Activated CD4-positive, alpha-beta T cell treated with anti-CD3 and anti-CD28 coated beads, Interleukin-2, amount 10 ng/mL, durations not matched to agents 24 days and 14 days (primary cell): ENCODE measurements at regions of chr6 and their contacts with region 1.

Region 1: GRCh38 chr6:127291495-127291894 is 24.8 kb downstream of the RNF146 start:
- DNase-seq: no peak
- H3K4me3 Mint-ChIP-seq: peak overlapping the region; percentile 20
- H3K27ac Mint-ChIP-seq: peak overlapping the region; percentile 76
- H3K4me1 Mint-ChIP-seq: peaks cover 26% of the 10 kb centered on the region
- H3K27me3 Mint-ChIP-seq: no peaks in the 10 kb centered on the region

Region 2: GRCh38 chr6:127342946-127343808 is 51.7 kb after region 1 on chr6 and contains the start of gene ECHDC1:
- intact Hi-C with region 1: loop called (anchors 1 kb)
- DNase-seq: peak; percentile 91
- H3K4me3 Mint-ChIP-seq: no peak within 1 kb of the TSS
- H3K27ac Mint-ChIP-seq: no peak within 1 kb of the TSS
- H3K4me1 Mint-ChIP-seq: peaks cover 18% of the 10 kb centered on the region
- H3K27me3 Mint-ChIP-seq: no peaks in the 10 kb centered on the region
- total RNA-seq, gene ECHDC1: 60.2 and 63.1 TPM in 2 replicates

Region 3: DNA sequence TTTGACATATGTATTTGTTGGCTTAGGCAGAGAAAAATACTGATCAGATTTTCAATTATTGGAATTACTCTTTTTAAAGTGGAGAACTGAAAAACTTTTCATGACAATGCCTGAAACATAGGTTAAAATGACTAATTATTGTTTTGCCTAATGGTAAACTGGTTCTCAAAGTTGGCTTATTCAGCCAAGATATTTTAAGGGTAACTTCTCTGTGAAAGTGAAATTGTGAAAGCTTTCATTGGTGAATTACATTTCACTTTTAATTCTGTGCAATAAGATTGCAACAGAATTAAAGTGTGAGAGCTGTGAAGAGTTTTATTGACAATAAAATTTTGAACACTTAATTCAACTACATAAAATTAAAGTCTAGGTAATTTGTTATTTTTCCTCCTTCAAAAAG is 143.2 kb after region 1 on chr6:
- intact Hi-C with region 1: no loop called
- DNase-seq: no peak
- H3K4me3 Mint-ChIP-seq: no peak overlapping the region
- H3K27ac Mint-ChIP-seq: no peak overlapping the region
- H3K4me1 Mint-ChIP-seq: no peaks in the 10 kb centered on the region
- H3K27me3 Mint-ChIP-seq: peaks cover 11% of the 10 kb centered on the region